Prostate gland (tissue), 2 donors: ENCODE measurements at regions of chr6 and their contacts with region 1.

Region 1: GRCh38 chr6:42043787-42044475 is 6.4 kb upstream of the TAF8 start:
- DNase-seq: peak; percentile 81
- H3K4me3 ChIP-seq: no peak overlapping the region
- H3K27ac ChIP-seq: peak overlapping the region; percentile 90 to 92
- H3K4me1 ChIP-seq: peaks cover 39% of the 10 kb centered on the region
- H3K27me3 ChIP-seq: no peaks in the 10 kb centered on the region
- CTCF ChIP-seq: peak; percentile 97 to 98 (median 97)
- POLR2A ChIP-seq: no peak

Region 2: DNA sequence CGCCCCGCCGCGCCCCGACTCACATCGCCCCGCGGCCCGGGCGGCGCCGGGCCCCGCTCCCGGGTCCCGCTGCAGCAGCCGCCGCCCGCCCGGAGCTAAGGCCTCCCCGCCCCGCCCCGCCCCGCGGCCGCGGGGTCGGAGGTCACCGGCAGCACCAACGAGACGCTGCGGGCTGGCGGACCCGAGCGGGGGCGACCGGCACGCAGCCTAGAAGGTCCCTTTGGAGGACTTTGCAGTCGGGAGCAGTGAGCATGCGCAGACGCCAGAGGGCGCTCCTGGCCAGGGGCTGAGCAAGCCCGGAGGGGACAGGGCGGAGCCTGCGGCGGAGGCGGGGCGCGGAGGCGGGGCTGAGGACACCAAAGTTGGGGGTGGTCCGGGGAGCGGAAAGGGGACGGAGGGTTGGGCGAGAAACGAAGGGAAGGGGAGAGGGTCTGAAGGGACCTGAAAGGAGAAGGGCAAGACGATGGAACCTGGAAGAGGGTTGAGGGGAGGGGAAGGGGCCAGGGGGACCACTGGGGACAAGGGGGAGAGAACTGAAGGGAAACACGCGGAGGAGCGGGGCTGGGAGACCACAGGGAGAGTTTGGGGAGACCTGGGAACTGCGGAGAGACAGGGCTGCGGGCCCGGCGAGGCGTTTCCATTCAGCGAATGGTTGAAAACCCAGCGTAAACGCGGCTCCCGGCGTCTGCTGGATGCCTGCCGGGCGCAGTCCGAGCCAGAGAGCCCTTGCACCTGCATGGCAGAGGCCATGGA is 264.0 kb before region 1 on chr6 and contains the start of gene FRS3:
- intact Hi-C with region 1: loop called (anchors 1 kb)
- DNase-seq: peak; percentile 97
- H3K4me3 ChIP-seq: peak within 1 kb of the TSS; percentile 45 to 65
- H3K27ac ChIP-seq: peak within 1 kb of the TSS; percentile 82 to 89
- H3K4me1 ChIP-seq: peaks cover 16% of the 10 kb centered on the region
- H3K27me3 ChIP-seq: no peaks in the 10 kb centered on the region
- CTCF ChIP-seq: peak; percentile 91 to 99 (median 96)
- POLR2A ChIP-seq: peak; percentile 57
- total RNA-seq, gene FRS3: 5.9 to 18.4 TPM

Region 3: GRCh38 chr6:41846666-41847237 is 197.2 kb before region 1 on chr6:
- intact Hi-C with region 1: loop called (anchors 2 kb)
- DNase-seq: peak; percentile 87
- H3K4me3 ChIP-seq: no peak overlapping the region
- H3K27ac ChIP-seq: peak overlapping the region; percentile 31 to 45
- H3K4me1 ChIP-seq: no peaks in the 10 kb centered on the region
- H3K27me3 ChIP-seq: no peaks in the 10 kb centered on the region
- CTCF ChIP-seq: peak; percentile 55 to 92 (median 81)
- POLR2A ChIP-seq: no peak

Region 4: DNA sequence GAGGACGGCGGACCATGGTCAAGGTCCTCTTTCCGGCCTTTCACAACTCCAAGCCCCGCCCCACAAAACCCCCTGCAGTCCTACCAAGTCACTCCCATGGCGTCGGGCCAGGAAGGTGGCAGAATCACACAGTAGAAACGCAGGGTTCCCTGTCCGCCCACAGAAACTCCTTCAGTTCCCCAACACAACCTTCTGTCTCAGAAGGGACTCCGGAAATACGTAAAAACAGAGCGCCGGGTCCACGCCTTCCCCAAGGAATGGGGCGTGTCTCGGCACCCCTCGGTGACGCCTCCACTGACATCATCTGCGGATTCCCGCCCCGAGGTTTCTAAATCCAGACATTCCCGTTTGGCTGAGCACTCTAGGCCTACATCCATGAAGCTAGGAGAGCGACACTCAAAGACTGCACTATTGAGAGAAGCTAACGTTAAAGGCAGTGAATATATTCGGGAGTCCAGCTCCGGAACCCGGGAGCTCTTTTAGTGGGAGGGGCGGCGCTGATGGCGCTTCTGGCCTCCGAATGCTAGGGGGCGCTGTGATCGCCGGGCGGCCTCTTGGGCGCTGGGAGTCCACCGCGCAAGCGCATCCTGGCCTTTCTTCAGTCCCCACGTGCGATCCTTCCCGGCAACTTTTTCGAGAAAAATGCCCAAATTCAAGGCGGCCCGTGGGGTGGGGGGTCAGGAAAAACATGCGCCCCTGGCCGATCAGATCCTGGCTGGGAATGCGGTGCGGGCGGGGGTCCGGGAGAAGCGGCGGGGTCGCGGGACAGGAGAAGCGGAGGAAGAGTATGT is 122.8 kb before region 1 on chr6 and contains the starts of genes BYSL and MED20:
- intact Hi-C with region 1: loop called (anchors 2 kb)
- DNase-seq: peak; percentile 95
- H3K4me3 ChIP-seq: peak within 1 kb of the TSS; percentile 67 to 83
- H3K27ac ChIP-seq: peak within 1 kb of the TSS; percentile 97 to 98
- H3K4me1 ChIP-seq: peaks cover 8% of the 10 kb centered on the region
- H3K27me3 ChIP-seq: no peaks in the 10 kb centered on the region
- CTCF ChIP-seq: peak; percentile 90 to 99 (median 98)
- POLR2A ChIP-seq: peak; percentile 66
- total RNA-seq, gene BYSL: 9.5 to 12.6 TPM
- total RNA-seq, gene MED20: 20.2 to 25.5 TPM

Region 5: GRCh38 chr6:41941280-41942066 is 102.5 kb before region 1 on chr6 and contains the start of gene CCND3:
- intact Hi-C with region 1: loop called (anchors 5 kb)
- DNase-seq: peak; percentile 83
- H3K4me3 ChIP-seq: peak within 1 kb of the TSS; percentile 58 to 79
- H3K27ac ChIP-seq: peak within 1 kb of the TSS; percentile 66 to 77
- H3K4me1 ChIP-seq: peaks cover 10% of the 10 kb centered on the region
- H3K27me3 ChIP-seq: no peaks in the 10 kb centered on the region
- CTCF ChIP-seq: no peak
- POLR2A ChIP-seq: peak; percentile 23
- total RNA-seq, gene CCND3: 145 to 153 TPM

Region 6: DNA sequence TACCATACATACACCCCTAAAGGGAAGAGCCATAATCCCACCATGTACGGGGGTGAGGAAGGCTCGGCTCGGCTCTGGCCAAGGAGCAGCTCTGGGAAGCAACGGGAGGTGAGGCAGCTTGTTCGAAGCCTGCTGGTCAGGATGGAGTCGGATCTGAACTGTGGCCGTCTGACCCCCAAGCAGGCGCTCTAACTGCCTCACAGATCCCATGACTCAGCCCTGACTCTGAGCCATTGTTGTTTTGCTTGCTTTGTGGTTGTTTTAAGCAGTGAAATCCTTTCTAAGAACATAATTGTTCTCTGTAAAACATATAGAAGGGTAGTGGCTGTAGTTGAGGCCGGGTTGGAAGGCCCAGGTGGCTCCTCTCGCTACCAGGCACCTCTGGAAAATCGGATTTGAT is 87.6 kb after region 1 on chr6:
- intact Hi-C with region 1: no loop called
- DNase-seq: no peak
- H3K4me3 ChIP-seq: no peak overlapping the region
- H3K27ac ChIP-seq: no peak overlapping the region
- H3K4me1 ChIP-seq: peaks cover 5% of the 10 kb centered on the region
- H3K27me3 ChIP-seq: no peaks in the 10 kb centered on the region
- CTCF ChIP-seq: no peak
- POLR2A ChIP-seq: no peak